ENCODE measurements at regions of chr12 and their contacts with region 1.

Region 1: DNA sequence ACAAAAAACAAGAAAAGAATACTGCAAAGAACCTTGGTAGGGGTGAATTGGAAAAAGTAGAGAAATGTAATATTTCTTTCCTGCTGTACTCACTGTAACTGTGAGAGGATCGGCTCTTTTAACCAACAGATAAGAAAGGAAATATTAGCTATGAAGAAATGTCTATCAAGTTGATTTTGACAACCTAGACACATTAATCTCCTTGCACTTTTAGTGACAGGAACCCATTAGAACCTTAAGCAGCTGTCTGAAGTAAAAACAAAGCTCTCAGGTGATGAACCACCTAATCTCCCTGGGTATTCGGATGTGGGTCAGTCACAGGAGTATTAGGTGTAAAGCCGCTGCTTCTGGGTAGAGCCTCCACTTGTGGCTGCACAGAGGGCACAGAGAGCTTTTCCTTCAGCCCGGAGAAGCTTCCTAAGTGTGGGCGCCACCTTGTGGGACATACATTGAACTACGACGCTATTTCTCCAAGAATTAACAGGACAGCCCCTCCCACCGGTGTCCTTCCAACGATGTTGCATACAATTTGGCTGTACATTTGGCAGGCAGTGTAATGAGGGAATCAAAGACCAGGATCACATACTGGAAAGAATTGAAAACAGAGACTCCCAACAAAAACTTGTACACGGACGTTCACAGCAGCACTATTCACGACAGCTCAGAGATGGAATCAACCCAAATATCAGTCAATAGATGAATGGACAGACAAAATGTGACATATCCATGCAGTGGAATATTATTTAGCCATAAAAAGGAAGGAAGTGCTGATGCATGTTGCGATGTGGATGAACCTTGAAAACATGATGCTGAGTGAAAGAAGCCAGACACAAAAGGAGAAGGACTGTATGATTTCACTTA is 28.9 kb upstream of the MAPKAPK5 start:
- DNase-seq: peak; percentile 81
- H3K4me3 ChIP-seq: no peak overlapping the region
- H3K27ac ChIP-seq: no peak overlapping the region
- H3K4me1 ChIP-seq: no peaks in the 10 kb centered on the region
- H3K27me3 ChIP-seq: no peaks in the 10 kb centered on the region
- CTCF ChIP-seq: peak; percentile 52 to 93 (median 86)
- POLR2A ChIP-seq: no peak

Region 2: GRCh38 chr12:111753144-111753881 is 59.8 kb before region 1 on chr12:
- intact Hi-C with region 1: loop called (anchors 1 kb)
- DNase-seq: peak; percentile 54
- H3K4me3 ChIP-seq: no peak overlapping the region
- H3K27ac ChIP-seq: no peak overlapping the region
- H3K4me1 ChIP-seq: peaks cover 19% of the 10 kb centered on the region
- H3K27me3 ChIP-seq: no peaks in the 10 kb centered on the region
- CTCF ChIP-seq: peak; percentile 58 to 89 (median 84)
- POLR2A ChIP-seq: no peak

Region 3: DNA sequence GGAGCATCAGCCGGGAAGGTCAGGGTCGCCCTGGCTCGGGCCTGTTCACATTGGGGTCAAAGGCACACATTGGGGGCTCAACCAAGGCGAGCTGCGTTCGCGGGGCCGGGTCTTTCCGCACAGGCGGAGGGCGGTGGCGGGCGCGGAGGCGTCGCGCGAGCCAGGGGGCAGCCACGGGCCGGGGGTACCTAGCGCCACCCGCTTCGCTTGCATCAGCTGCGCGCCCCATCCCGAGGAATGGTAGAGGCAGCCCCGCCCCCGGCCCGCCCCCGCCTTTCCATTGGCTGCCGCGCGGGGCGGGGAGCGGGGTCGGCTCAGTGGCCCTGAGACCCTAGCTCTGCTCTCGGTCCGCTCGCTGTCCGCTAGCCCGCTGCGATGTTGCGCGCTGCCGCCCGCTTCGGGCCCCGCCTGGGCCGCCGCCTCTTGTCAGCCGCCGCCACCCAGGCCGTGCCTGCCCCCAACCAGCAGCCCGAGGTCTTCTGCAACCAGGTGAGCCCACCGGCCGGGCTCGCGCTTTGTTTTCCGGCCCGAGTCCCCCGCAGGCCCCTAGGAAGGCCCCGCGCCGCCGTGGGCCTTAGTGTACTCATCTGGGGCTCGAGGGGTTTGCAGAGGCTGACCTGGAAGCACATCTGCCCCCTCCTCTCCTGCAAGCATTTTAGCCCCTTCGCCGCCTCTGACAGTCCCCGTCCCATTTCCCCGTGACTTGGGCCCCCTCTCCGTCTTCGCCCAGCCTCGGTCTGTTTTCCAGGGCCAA is 46.3 kb before region 1 on chr12 and contains the start of gene ALDH2:
- intact Hi-C with region 1: loop called (anchors 5 kb)
- DNase-seq: peak; percentile 81
- H3K4me3 ChIP-seq: peak within 1 kb of the TSS; percentile 80 to 93
- H3K27ac ChIP-seq: peak within 1 kb of the TSS; percentile 88 to 91
- H3K4me1 ChIP-seq: peaks cover 2% of the 10 kb centered on the region
- H3K27me3 ChIP-seq: no peaks in the 10 kb centered on the region
- CTCF ChIP-seq: peak in 2 of 4 experiments; percentile 39 to 45
- POLR2A ChIP-seq: peak; percentile 91
- total RNA-seq, gene ALDH2: 107 to 164 TPM

Region 4: GRCh38 chr12:111777345-111778045 is 35.6 kb before region 1 on chr12:
- intact Hi-C with region 1: no loop called
- DNase-seq: peak; percentile 44
- H3K4me3 ChIP-seq: no peak overlapping the region
- H3K27ac ChIP-seq: peak overlapping the region; percentile 87 to 91
- H3K4me1 ChIP-seq: peaks cover 36% of the 10 kb centered on the region
- H3K27me3 ChIP-seq: no peaks in the 10 kb centered on the region
- CTCF ChIP-seq: no peak
- POLR2A ChIP-seq: no peak

Measured in prostate gland (tissue), 2 donors.